ENCODE measurements at regions of chr15 and their contacts with region 1.

Region 1: GRCh38 chr15:68312701-68313204 is 35.2 kb downstream of the FEM1B start:
- DNase-seq: peak in 8 of 10 donors; percentile 23 to 75 (median 42)
- H3K4me3 ChIP-seq: no peak overlapping the region
- H3K27ac ChIP-seq: peak overlapping the region in 1 of 59 donors; percentile 28
- H3K27me3 ChIP-seq: no peaks in the 10 kb centered on the region
- CTCF ChIP-seq: no peak

Region 2: GRCh38 chr15:68114840-68115239 is 197.9 kb before region 1 on chr15:
- intact Hi-C with region 1: no loop called
- DNase-seq: no peak
- H3K4me3 ChIP-seq: peak overlapping the region in 55 of 59 donors; percentile 3 to 59 (median 40)
- H3K27ac ChIP-seq: peak overlapping the region in 2 of 59 donors; percentile 5 to 21
- H3K27me3 ChIP-seq: no peaks in the 10 kb centered on the region
- CTCF ChIP-seq: no peak

Region 3: GRCh38 chr15:68372291-68372811 is 59.6 kb after region 1 on chr15:
- intact Hi-C with region 1: loop called in 1 of 2 experiments (anchors 5 kb)
- DNase-seq: no peak
- H3K4me3 ChIP-seq: no peak overlapping the region
- H3K27ac ChIP-seq: no peak overlapping the region
- H3K27me3 ChIP-seq: no peaks in the 10 kb centered on the region
- CTCF ChIP-seq: peak in 36 of 56 donors; percentile 9 to 57 (median 27)

Region 4: GRCh38 chr15:68389936-68390790 is 77.4 kb after region 1 on chr15:
- intact Hi-C with region 1: loop called in 1 of 2 experiments (anchors 5 kb)
- DNase-seq: peak in 2 of 10 donors; percentile 15 to 21
- H3K4me3 ChIP-seq: no peak overlapping the region
- H3K27ac ChIP-seq: no peak overlapping the region
- H3K27me3 ChIP-seq: peaks cover 0 to 15% (median 0%) of the 10 kb centered on the region in 45 donors
- CTCF ChIP-seq: no peak